ENCODE measurements at regions of chr5 and their contacts with region 1.

Region 1: DNA sequence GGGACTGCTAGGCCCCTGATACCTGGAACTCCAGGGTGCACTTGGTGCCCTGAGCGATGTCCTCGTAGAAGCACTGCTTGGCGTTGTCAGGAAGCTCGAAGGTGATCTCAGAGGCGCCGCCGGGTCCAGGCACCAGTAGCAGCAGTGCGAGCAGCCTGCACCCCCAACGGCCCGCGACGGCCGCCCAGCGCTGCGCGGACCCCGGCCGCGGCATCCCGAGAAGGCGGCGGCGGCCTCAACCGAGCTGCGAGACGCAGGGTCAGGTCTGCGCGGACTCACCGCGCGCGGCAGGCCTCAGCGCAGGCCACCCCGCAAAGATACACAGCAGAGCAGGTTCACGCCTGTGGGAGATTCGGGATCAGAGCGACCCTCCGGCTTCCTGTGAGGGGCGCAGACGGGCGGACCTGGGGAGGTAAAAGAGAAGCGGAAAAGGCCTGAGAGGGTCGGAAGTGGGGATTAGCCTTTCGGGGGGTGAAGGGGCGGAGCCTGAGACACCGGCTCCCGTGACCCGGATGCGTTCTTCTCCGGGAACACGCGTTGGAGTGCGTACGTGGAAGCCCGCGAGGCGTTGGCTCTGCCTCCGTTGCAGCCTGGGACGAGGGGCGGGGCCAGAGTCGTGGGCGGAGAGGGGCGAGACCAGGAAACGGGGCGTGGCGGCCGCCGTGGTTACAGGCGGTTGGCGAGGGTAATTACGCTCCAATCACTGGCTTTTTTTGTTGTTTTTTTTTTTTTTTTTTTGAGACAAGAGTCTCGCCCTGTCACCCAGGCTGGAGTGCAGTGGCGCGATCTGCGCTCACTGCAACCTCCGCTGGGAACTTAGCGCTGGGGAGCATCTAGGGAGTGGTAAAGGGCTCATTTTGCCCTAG is at the start of gene TMED7:
- DNase-seq: peak; percentile 98 to 100 (median 99)

Region 2: DNA sequence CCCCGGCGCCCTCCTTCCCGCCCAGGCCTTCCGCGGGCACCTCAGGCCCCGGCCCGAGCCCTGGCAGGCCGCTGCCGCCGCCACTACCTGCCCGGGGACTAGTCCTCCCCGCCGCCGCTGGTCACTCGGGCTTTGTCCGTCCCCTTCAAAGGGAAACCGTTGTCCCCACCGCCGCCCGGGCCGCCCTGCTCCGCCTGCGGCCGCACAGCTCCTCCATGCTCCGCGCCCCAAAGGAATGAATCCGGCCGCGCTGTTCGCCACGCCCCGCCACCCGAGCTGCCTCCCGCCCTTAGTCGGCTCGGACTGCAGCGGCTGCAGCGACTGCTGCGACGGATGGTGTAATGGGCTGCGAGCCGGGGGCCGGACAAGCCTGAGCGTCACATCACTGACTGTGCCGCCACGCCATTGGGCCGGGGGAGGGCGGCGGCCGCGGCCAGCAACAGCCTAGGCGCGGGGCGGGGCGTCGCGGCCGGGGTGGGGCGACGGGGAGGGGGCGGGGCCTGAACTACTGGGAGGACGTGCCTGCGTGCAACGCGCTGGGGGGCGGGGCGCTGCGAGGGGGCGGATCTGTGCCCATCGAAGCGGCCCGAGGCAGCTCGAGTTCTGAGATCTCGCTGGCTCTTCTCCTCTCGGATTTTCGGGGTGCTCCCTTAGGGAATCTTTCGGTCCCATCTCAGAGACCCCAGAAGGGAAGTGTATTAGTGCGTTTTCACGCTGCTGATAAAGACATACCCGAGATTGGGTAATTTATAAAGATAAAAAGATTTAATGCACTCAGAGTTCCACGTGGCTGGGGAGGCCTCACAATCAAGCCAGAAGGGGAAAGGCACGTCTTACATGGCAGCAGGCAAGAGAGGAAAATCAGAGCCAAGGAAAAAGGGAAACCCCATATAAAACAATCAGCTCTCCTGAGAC is 81.1 kb before region 1 on chr5 and contains the start of gene FEM1C:
- intact Hi-C with region 1: loop called (anchors 5 kb)
- DNase-seq: peak; percentile 94 to 99 (median 98)

Region 3: GRCh38 chr5:115709585-115709984 is 83.8 kb after region 1 on chr5:
- intact Hi-C with region 1: no loop called
- DNase-seq: no peak

Region 4: GRCh38 chr5:115841382-115842088 is 215.7 kb after region 1 on chr5 and contains the starts of genes AP3S1 and ATG12:
- intact Hi-C with region 1: loop called (anchors 5 kb)
- DNase-seq: peak; percentile 88 to 97 (median 93)

Measured in head of caudate nucleus (tissue), 42 donors.